PC-3 (cell line): ENCODE measurements at regions of chr16 and their contacts with region 1.

Region 1: GRCh38 chr16:65105171-65105570 is 16.7 kb downstream of the CDH11 start:
- DNase-seq: no peak
- ATAC-seq: no peak
- H3K4me3 ChIP-seq: no peak overlapping the region
- H3K27ac ChIP-seq: no peak overlapping the region
- H3K4me1 ChIP-seq: peaks cover 4% of the 10 kb centered on the region
- H3K27me3 ChIP-seq: no peaks in the 10 kb centered on the region
- CTCF ChIP-seq: no peak

Region 2: GRCh38 chr16:65021852-65022595 is 83.1 kb before region 1 on chr16:
- CTCF ChIA-PET with region 1: no interaction called
- POLR2A ChIA-PET with region 1: interaction called, 10 read pairs
- intact Hi-C with region 1: no loop called
- DNase-seq: no peak
- ATAC-seq: no peak
- H3K4me3 ChIP-seq: no peak overlapping the region
- H3K27ac ChIP-seq: no peak overlapping the region
- H3K4me1 ChIP-seq: no peaks in the 10 kb centered on the region
- H3K27me3 ChIP-seq: no peaks in the 10 kb centered on the region
- CTCF ChIP-seq: no peak

Region 3: DNA sequence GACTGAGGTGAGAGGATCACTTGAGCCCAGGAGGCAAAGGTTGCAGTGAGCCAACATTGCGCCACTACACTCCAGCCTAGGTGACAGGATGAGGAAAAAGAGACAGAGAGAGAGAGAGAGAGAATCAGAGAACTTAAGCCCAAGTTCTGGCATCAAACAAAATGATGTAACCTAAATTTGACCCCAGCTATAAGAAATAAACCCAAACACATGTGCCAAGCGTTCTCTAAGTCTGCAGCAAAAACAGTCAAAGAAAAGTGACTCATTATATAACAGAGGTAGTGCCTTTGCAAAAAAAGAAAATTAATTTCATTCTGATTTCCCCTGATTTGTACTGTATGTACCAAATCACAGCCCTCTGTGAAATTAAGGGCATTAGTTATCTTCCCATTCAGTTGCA is 72.8 kb before region 1 on chr16:
- CTCF ChIA-PET with region 1: no interaction called
- POLR2A ChIA-PET with region 1: no interaction called
- intact Hi-C with region 1: no loop called
- DNase-seq: no peak
- ATAC-seq: no peak
- H3K4me3 ChIP-seq: no peak overlapping the region
- H3K27ac ChIP-seq: no peak overlapping the region
- H3K4me1 ChIP-seq: no peaks in the 10 kb centered on the region
- H3K27me3 ChIP-seq: no peaks in the 10 kb centered on the region
- CTCF ChIP-seq: no peak